Ovary (tissue), 10 donors: ENCODE measurements at regions of chr7 and their contacts with region 1.

Region 1: GRCh38 chr7:24653316-24654085 is 80.2 kb downstream of the PALS2 start:
- DNase-seq: no peak
- H3K4me3 ChIP-seq: no peak overlapping the region
- H3K27ac ChIP-seq: peak overlapping the region in 1 of 2 donors; percentile 33
- H3K4me1 ChIP-seq: peaks cover 2% of the 10 kb centered on the region
- H3K27me3 ChIP-seq: no peaks in the 10 kb centered on the region
- CTCF ChIP-seq: no peak
- EP300 ChIP-seq: no peak
- POLR2A ChIP-seq: no peak

Region 2: GRCh38 chr7:24419077-24419476 is 234.4 kb before region 1 on chr7:
- intact Hi-C with region 1: loop called in 1 of 4 experiments (anchors 10 kb)
- DNase-seq: no peak
- H3K4me3 ChIP-seq: no peak overlapping the region
- H3K27ac ChIP-seq: no peak overlapping the region
- H3K4me1 ChIP-seq: no peaks in the 10 kb centered on the region
- H3K27me3 ChIP-seq: no peaks in the 10 kb centered on the region
- CTCF ChIP-seq: no peak
- EP300 ChIP-seq: no peak
- POLR2A ChIP-seq: no peak

Region 3: GRCh38 chr7:24572997-24573625 is 80.4 kb before region 1 on chr7 and contains the start of gene PALS2:
- intact Hi-C with region 1: loop called in 1 of 4 experiments (anchors 10 kb)
- DNase-seq: peak; percentile 82 to 87 (median 86)
- H3K4me3 ChIP-seq: peak within 1 kb of the TSS; percentile 68
- H3K27ac ChIP-seq: peak within 1 kb of the TSS; percentile 77 to 85
- H3K4me1 ChIP-seq: no peaks in the 10 kb centered on the region
- H3K27me3 ChIP-seq: no peaks in the 10 kb centered on the region
- CTCF ChIP-seq: no peak
- EP300 ChIP-seq: no peak
- POLR2A ChIP-seq: peak; percentile 26
- total RNA-seq, gene PALS2: 42.5 to 271 (median 95.5) TPM

Region 4: GRCh38 chr7:25913598-25914224 is 1260.2 kb after region 1 on chr7:
- intact Hi-C with region 1: no loop called
- DNase-seq: no peak
- H3K4me3 ChIP-seq: no peak overlapping the region
- H3K27ac ChIP-seq: no peak overlapping the region
- H3K4me1 ChIP-seq: no peaks in the 10 kb centered on the region
- H3K27me3 ChIP-seq: no peaks in the 10 kb centered on the region
- CTCF ChIP-seq: no peak
- EP300 ChIP-seq: no peak
- POLR2A ChIP-seq: no peak